HepG2 (cell line): ENCODE measurements at regions of chr1 and their contacts with region 1.

Region 1: DNA sequence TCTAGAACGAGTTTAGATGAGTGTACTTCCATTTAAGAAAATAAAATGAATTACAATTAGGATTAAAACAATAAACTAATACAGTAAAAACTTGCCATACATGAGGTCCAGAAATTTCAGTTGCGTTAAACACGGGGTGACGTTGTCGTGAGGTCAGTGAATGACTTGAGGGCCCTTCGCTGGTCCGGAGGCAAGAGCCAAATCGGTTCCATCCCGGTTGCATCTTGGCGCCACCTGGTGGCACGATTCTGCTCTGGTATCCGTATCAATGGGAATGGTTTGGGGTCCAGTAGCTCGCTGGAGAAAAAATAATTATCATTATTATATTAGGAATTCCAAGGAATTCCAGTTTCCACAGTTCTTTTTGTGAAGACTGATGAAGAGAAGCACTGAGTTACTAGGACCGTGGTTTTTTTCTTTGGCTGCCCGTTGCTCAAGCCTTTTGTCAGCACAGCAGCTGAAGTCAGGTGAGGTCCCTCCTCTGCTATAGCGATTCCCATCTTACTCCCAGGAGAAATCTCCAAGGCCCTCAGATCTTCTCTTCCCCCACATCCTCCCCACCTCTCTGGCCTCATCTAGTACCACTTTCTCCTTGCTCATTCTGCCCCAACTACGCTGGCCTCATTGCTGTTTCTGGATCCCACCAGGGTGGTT is 161.4 kb downstream of the SLC35F3 start:
- DNase-seq: peak; percentile 40
- ATAC-seq: peak; percentile 84
- H3K4me3 ChIP-seq: no peak overlapping the region
- H3K27ac ChIP-seq: no peak overlapping the region
- H3K4me1 ChIP-seq: no peaks in the 10 kb centered on the region
- H3K27me3 ChIP-seq: no peaks in the 10 kb centered on the region
- CTCF ChIP-seq: peak; percentile 78
- EP300 ChIP-seq: no peak
- POLR2A ChIP-seq: no peak
- RAD21 ChIP-seq: peak; percentile 38; the same call in 1 of the 2 replicates

Region 2: DNA sequence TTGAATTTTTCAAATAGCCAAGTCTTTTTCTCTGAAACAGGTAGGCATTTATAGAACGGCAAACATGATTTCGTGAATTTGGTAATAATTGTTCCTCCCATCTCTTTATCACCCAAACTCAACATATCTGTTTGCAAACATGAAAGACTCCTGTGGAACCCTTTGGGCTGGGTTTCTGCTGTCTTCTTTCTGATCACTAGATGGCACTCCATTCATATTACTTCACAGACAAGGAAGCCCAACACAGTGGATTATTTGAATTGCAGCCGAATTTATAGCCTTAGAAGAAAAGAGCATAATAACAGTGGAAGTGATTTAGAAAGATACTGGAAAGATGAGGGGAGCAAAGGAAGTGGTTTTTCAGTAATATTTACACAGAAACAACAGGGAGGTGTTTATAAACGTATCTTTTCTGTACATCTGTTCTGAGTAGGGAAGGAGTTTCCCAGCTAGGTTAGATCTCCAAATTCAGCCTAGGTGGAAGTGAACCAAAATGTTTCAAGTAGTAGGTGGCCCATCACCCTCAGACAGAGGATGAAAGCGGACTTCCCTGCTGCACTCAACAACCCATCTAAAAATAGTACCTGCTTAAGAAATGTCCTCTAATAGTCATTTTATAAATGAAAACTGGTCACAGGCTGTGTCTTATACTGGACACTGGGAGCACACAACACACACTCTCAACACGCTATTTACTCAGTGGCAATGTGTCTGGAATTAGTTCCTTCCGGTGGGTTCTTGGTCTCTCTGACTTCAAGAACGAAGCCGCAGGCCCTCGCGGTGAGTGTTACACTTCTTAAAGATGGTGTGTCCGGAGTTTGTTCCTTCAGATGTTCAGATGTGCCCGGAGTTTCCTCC is 670.8 kb before region 1 on chr1:
- CTCF ChIA-PET with region 1: interaction called, 13 read pairs
- POLR2A ChIA-PET with region 1: no interaction called
- in situ Hi-C with region 1: loop called (anchors 10 kb)
- intact Hi-C with region 1: loop called (anchors 1 kb)
- DNase-seq: peak; percentile 33
- ATAC-seq: peak; percentile 86
- H3K4me3 ChIP-seq: no peak overlapping the region
- H3K27ac ChIP-seq: no peak overlapping the region
- H3K4me1 ChIP-seq: no peaks in the 10 kb centered on the region
- H3K27me3 ChIP-seq: no peaks in the 10 kb centered on the region
- CTCF ChIP-seq: peak; percentile 73
- EP300 ChIP-seq: no peak
- POLR2A ChIP-seq: no peak
- RAD21 ChIP-seq: peak; percentile 39; the same call in 1 of the 2 replicates

Region 3: GRCh38 chr1:233440951-233441401 is 624.9 kb before region 1 on chr1:
- CTCF ChIA-PET with region 1: interaction called, 14 read pairs
- POLR2A ChIA-PET with region 1: no interaction called
- in situ Hi-C with region 1: no loop called
- intact Hi-C with region 1: no loop called
- DNase-seq: peak; percentile 31
- ATAC-seq: peak; percentile 51; the same call in 2 of the 3 replicates
- H3K4me3 ChIP-seq: no peak overlapping the region
- H3K27ac ChIP-seq: no peak overlapping the region
- H3K4me1 ChIP-seq: no peaks in the 10 kb centered on the region
- H3K27me3 ChIP-seq: no peaks in the 10 kb centered on the region
- CTCF ChIP-seq: peak; percentile 80
- EP300 ChIP-seq: no peak
- POLR2A ChIP-seq: no peak
- RAD21 ChIP-seq: peak; percentile 61; the same call in 1 of the 2 replicates

Region 4: GRCh38 chr1:234083460-234083859 is 17.5 kb after region 1 on chr1:
- CTCF ChIA-PET with region 1: no interaction called
- POLR2A ChIA-PET with region 1: no interaction called
- in situ Hi-C with region 1: no loop called
- intact Hi-C with region 1: loop called (anchors 1 kb)
- DNase-seq: no peak
- ATAC-seq: no peak
- H3K4me3 ChIP-seq: no peak overlapping the region
- H3K27ac ChIP-seq: no peak overlapping the region
- H3K4me1 ChIP-seq: no peaks in the 10 kb centered on the region
- H3K27me3 ChIP-seq: no peaks in the 10 kb centered on the region
- CTCF ChIP-seq: no peak
- EP300 ChIP-seq: no peak
- POLR2A ChIP-seq: no peak
- RAD21 ChIP-seq: no peak